A673 (cell line): ENCODE measurements at regions of chr17 and their contacts with region 1.

Region 1: GRCh38 chr17:55348749-55349354 is 72.8 kb downstream of the MMD start:
- DNase-seq: peak; percentile 83
- H3K4me3 ChIP-seq: no peak overlapping the region
- H3K27ac ChIP-seq: no peak overlapping the region
- H3K4me1 ChIP-seq: peaks cover 19% of the 10 kb centered on the region
- H3K27me3 ChIP-seq: no peaks in the 10 kb centered on the region
- CTCF ChIP-seq: peak; percentile 91

Region 2: GRCh38 chr17:54992797-54993639 is 355.8 kb before region 1 on chr17:
- CTCF ChIA-PET with region 1: interaction called, 6 read pairs
- POLR2A ChIA-PET with region 1: no interaction called
- intact Hi-C with region 1: loop called (anchors 1 kb)
- DNase-seq: peak; percentile 74
- H3K4me3 ChIP-seq: no peak overlapping the region
- H3K27ac ChIP-seq: no peak overlapping the region
- H3K4me1 ChIP-seq: no peaks in the 10 kb centered on the region
- H3K27me3 ChIP-seq: no peaks in the 10 kb centered on the region
- CTCF ChIP-seq: peak; percentile 80

Region 3: GRCh38 chr17:55053855-55054254 is 295.0 kb before region 1 on chr17:
- CTCF ChIA-PET with region 1: no interaction called
- POLR2A ChIA-PET with region 1: interaction called, 3 read pairs
- intact Hi-C with region 1: loop called (anchors 1 kb)
- DNase-seq: peak; percentile 58
- H3K4me3 ChIP-seq: no peak overlapping the region
- H3K27ac ChIP-seq: no peak overlapping the region
- H3K4me1 ChIP-seq: peaks cover 31% of the 10 kb centered on the region
- H3K27me3 ChIP-seq: no peaks in the 10 kb centered on the region
- CTCF ChIP-seq: peak; percentile 73

Region 4: DNA sequence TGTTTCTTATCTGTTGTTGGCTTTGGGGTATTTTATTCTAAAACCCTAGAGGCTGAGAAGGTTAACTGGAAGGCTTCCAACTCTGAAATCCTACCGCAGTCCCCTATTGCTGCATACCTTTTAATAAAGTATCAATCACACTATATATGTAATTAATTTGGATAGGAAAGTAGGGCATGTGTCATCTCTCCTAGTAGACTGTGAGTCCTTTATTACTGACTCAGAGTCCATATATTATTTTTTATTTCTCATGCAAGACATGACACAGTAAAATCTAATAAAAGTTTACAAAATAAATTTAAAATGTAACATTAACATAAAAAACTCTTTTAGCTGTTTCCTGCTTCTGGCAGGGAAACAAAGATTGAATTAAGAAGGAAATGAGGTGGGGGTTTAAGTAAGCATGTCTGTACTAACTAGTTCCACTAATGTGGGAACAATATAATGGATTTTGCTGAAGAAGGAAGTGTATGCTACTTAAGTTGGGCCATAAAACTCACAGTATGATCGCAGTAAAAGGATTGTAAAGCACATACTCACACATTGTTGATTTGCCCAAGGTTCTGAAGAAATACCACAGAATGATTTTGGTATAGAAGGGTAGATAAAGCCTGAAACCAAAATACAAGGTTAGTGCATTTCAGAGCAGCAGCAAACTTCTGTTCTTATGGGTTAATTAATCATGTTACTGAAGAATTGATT is 181.7 kb before region 1 on chr17:
- CTCF ChIA-PET with region 1: no interaction called
- POLR2A ChIA-PET with region 1: no interaction called
- intact Hi-C with region 1: loop called (anchors 2 kb)
- DNase-seq: peak; percentile 98
- H3K4me3 ChIP-seq: no peak overlapping the region
- H3K27ac ChIP-seq: peak overlapping the region; percentile 72
- H3K4me1 ChIP-seq: peaks cover 65% of the 10 kb centered on the region
- H3K27me3 ChIP-seq: no peaks in the 10 kb centered on the region
- CTCF ChIP-seq: no peak

Region 5: DNA sequence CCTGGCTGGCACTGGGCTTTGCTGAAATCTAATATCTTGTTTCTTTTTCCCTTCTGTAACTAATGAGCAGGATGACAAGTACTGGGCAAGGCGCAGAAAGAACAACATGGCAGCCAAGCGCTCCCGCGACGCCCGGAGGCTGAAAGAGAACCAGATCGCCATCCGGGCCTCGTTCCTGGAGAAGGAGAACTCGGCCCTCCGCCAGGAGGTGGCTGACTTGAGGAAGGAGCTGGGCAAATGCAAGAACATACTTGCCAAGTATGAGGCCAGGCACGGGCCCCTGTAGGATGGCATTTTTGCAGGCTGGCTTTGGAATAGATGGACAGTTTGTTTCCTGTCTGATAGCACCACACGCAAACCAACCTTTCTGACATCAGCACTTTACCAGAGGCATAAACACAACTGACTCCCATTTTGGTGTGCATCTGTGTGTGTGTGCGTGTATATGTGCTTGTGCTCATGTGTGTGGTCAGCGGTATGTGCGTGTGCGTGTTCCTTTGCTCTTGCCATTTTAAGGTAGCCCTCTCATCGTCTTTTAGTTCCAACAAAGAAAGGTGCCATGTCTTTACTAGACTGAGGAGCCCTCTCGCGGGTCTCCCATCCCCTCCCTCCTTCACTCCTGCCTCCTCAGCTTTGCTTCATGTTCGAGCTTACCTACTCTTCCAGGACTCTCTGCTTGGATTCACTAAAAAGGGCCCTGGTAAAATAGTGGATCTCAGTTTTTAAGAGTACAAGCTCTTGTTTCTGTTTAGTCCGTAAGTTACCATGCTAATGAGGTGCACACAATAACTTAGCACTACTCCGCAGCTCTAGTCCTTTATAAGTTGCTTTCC is 28.0 kb before region 1 on chr17:
- CTCF ChIA-PET with region 1: no interaction called
- POLR2A ChIA-PET with region 1: no interaction called
- intact Hi-C with region 1: no loop called
- DNase-seq: no peak
- H3K4me3 ChIP-seq: no peak overlapping the region
- H3K27ac ChIP-seq: no peak overlapping the region
- H3K4me1 ChIP-seq: peaks cover 4% of the 10 kb centered on the region
- H3K27me3 ChIP-seq: no peaks in the 10 kb centered on the region
- CTCF ChIP-seq: no peak